ENCODE measurements at regions of chr22 and their contacts with region 1.

Region 1: GRCh38 chr22:29031227-29032011 is 30.2 kb downstream of the C22orf31 start:
- DNase-seq: peak; percentile 22 to 52
- ATAC-seq: peak; percentile 77 to 90 (median 86)
- H3K4me3 ChIP-seq: peak overlapping the region in 9 of 10 donors; percentile 24 to 58 (median 55)
- H3K27ac ChIP-seq: peak overlapping the region; percentile 29 to 84 (median 76)
- H3K4me1 ChIP-seq: peaks cover 6 to 34% (median 20%) of the 10 kb centered on the region in 9 donors
- H3K27me3 ChIP-seq: peaks cover 0 to 26% (median 0%) of the 10 kb centered on the region in 7 donors
- CTCF ChIP-seq: peak in 1 of 9 donors; percentile 8

Region 2: DNA sequence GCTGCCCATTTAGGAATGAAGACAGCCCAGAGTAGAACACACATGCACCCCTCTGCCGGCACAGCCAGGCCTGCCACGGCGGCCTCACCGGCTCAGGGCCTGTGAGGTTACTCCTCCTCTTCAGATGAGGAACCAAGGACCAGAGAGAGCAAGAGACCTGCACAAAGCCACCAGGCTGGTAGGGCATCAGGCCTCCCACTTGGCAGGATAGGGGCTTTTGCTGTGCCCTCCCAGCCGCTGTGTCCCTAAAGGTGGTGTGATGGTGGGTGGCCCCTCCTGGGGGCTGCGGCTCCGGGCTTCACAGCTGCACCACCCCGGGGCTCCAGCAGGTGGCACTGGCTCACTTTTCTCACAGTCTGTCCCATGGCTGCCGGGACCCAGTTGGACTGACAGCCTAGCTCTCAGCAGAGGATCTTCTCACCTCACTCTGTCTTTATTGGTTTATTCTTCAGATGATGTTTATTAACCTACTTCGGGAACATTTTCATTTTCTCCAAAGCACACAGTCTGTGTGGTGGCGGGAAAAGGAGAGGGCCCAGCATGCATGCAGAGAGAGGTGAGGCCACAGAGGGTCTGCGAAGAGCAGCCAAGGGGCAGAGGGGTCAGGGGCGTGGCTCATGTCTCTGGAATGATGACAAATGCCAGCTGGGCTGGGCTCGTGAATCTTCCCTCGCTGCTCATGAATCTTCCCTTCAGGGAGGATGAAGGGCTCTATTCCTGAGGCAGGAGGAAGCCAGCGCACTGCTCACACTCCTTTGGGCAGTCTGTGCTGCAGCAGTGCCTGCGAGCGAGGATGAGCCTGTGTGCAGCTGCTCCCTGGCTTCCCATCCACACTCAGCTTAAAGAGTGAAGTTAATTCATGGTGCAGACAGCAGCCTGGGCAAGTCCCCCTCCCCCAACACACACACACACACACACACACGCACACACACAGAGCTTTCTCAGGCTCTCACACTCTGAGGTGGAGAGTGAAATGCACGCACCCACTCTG is 1011.2 kb before region 1 on chr22:
- intact Hi-C with region 1: loop called in 1 of 10 experiments (anchors 10 kb)
- DNase-seq: peak; percentile 74 to 78
- ATAC-seq: peak; percentile 69 to 83 (median 74)
- H3K4me3 ChIP-seq: no peak overlapping the region
- H3K27ac ChIP-seq: peak overlapping the region in 1 of 10 donors; percentile 1
- H3K4me1 ChIP-seq: peaks cover 6 to 58% (median 23%) of the 10 kb centered on the region in 9 donors
- H3K27me3 ChIP-seq: no peaks in the 10 kb centered on the region
- CTCF ChIP-seq: peak; percentile 85 to 98 (median 96)

Region 3: DNA sequence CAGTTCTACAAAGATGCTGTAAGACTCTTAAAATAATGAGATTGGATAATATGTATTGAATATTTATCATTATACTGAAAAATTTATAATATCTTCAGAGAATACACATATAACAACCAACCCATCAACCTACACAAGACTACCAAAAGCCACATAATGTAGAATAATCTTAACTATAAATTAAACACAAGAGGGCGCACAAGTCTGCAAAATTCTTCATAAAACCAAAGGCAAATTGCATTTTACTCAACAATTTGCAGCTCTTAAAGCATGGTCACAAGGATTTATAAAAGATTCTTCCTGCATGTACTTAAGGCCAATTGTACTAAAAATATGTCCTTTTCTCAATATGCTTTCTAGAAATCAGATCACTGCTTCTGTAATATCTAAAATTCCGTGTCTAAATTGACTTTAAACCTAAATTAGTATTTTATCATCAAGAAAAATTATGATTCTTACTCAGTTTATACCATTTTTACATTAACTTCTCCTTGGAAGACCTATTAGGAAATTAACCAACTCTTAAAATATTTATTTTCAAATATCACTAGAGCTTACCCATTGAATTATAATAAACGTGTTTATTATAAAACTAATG is 430.8 kb before region 1 on chr22:
- intact Hi-C with region 1: loop called in 2 of 10 experiments (anchors 5 to 10 kb)
- DNase-seq: peak in 1 of 2 donors; percentile 17
- ATAC-seq: peak in 4 of 8 donors; percentile 28 to 39 (median 34)
- H3K4me3 ChIP-seq: no peak overlapping the region
- H3K27ac ChIP-seq: no peak overlapping the region
- H3K4me1 ChIP-seq: no peaks in the 10 kb centered on the region
- H3K27me3 ChIP-seq: no peaks in the 10 kb centered on the region
- CTCF ChIP-seq: peak in 8 of 9 donors; percentile 36 to 78 (median 62)

Region 4: DNA sequence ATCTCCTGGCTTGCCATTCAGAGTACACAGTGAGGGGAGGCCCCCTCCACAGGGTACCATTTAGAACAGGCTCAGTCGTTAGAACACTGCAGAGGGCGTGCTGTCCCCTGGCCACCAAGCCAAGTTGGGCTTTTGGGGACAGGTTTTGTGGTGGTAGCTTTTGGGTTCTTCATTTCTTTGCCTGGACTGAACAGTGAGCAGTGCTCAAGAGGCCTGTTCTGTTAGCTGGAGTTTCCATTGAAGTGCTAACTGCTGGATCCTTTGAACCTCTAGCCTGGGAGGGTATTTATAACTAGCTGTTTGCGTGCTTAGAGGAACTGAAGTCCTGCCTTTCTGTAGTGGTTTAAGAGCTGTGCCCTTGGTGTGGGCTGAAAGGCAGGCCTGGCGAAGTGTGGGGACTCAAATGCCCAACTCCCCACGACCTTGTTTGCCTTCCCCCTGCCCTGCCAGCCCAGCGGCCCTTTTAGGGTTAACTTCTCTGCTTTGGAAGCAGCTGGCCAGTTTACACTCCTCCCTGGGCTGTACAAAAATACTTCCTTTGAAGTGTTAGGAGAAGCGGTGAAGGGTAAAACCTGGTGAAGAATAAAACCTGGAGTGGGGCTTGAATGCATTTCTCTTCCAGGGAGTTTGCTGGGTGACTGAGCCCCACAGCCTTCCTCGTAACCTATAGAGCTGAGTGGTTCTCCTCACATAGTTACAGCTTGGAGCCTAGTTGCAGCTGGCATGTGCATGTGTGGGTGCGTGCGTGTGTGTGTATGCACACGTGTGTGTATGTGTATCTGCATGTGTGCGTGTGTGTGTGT is 113.5 kb before region 1 on chr22:
- intact Hi-C with region 1: loop called in 2 of 10 experiments (anchors 2 to 5 kb)
- DNase-seq: peak; percentile 30 to 34
- ATAC-seq: peak; percentile 83 to 92 (median 86)
- H3K4me3 ChIP-seq: no peak overlapping the region
- H3K27ac ChIP-seq: peak overlapping the region; percentile 66 to 90 (median 82)
- H3K4me1 ChIP-seq: peaks cover 4 to 36% (median 18%) of the 10 kb centered on the region in 9 donors
- H3K27me3 ChIP-seq: no peaks in the 10 kb centered on the region
- CTCF ChIP-seq: peak in 1 of 9 donors; percentile 5

Region 5: DNA sequence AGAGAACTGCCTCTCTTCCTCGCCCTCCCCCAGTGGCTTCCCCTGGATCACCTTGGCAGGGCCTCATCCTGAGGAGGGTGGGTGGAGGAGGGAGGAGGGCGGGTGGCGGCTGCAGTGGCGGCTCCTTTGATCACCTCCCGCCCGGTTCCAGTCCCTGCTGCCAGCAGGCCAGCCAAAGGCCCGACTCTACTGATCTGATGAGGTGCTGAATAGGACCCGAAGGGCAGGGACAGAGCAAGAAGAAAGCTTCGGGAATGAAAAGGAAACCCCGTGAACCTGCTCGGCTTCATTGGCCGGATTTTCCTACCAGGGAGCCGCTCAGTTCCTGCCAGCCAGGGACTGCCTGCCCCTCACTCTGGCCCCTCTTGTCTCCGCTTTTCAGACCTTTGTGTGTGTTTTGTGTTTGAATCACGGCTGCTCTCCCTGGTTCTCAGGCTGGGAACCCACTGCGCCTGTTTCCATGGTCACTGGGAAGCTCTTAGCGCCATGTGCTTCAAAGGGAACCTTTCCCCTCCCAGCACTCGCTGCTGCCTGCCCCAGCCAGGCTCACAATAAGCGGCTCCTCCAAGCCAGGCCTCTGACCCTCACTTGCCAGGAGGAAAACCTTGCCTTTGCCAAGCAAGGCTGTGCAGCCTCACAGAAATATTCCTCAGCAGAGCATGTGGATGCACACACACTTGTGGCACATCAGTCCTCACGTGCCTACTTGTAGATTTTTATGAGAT is 26.6 kb before region 1 on chr22:
- intact Hi-C with region 1: no loop called
- DNase-seq: peak; percentile 20 to 42
- ATAC-seq: peak; percentile 57 to 84 (median 79)
- H3K4me3 ChIP-seq: peak overlapping the region in 6 of 10 donors; percentile 9 to 31 (median 18)
- H3K27ac ChIP-seq: peak overlapping the region in 7 of 10 donors; percentile 25 to 65 (median 49)
- H3K4me1 ChIP-seq: peaks cover 0 to 40% (median 27%) of the 10 kb centered on the region in 9 donors
- H3K27me3 ChIP-seq: peaks cover 0 to 8% (median 0%) of the 10 kb centered on the region in 7 donors
- CTCF ChIP-seq: no peak

Measured in heart right ventricle (tissue), 16 donors.